HCT116 (cell line): ENCODE measurements at regions of chr11 and their contacts with region 1.

Region 1: GRCh38 chr11:14249121-14249963 is 109.6 kb downstream of the RRAS2 start:
- DNase-seq: peak; percentile 27
- ATAC-seq: peak; percentile 80
- H3K4me3 ChIP-seq: no peak overlapping the region
- H3K27ac ChIP-seq: no peak overlapping the region
- H3K4me1 ChIP-seq: no peaks in the 10 kb centered on the region
- H3K27me3 ChIP-seq: peaks cover 27% of the 10 kb centered on the region; the same call in 1 of the 2 replicates
- CTCF ChIP-seq: peak; percentile 76 to 98 (median 91)
- POLR2A ChIP-seq: no peak
- RAD21 ChIP-seq: peak; percentile 99

Region 2: DNA sequence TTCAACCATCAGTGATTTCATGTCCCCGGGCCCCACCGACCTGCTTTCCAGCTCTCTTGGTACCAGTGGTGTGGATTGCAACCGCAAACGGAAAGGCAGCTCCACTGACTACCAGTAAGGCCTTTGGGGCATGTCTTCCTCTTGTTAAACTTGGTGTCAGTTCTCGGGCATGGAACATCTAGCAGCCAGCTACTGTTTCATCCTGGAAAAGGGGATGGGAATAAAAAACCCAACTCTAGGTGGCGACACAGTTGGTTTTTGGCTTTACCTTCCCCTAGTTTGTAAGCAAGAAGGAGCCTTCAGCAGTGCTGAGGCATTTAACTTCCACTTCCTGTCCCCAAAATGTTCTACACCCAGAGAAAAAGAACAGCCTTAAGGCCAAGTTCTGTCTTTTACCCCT is 895.0 kb before region 1 on chr11:
- CTCF ChIA-PET with region 1: no interaction called
- POLR2A ChIA-PET with region 1: no interaction called
- RAD21 ChIA-PET with region 1: no interaction called
- intact Hi-C with region 1: loop called (anchors 10 kb)
- DNase-seq: no peak
- ATAC-seq: peak; percentile 87
- H3K4me3 ChIP-seq: no peak overlapping the region
- H3K27ac ChIP-seq: no peak overlapping the region
- H3K4me1 ChIP-seq: peaks cover 0 to 7% of the 10 kb centered on the region in 2 experiments; a peak in 1 of 4 replicates
- H3K27me3 ChIP-seq: no peaks in the 10 kb centered on the region
- CTCF ChIP-seq: peak; percentile 33 to 58 (median 57); a peak in 5 of 6 replicates
- POLR2A ChIP-seq: no peak
- RAD21 ChIP-seq: peak; percentile 59

Region 3: DNA sequence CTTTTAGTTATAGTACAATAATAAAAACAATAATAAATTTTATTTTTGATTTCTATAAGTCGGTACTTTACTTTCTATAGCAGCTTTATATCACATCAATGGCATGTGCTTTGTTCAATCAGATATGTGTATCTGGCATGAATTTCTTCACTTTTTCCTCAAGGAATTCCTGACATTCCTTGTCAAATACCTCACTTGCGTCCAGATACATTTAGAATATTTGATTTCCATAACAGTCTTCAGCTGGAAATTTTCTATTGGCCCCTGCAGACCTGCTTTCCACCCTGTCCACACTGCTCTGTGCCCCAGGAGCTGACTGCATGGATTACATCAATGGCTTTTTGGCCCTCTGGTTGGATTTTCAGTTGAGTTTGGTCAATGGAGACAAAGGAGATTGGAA is 487.6 kb before region 1 on chr11:
- CTCF ChIA-PET with region 1: no interaction called
- POLR2A ChIA-PET with region 1: no interaction called
- RAD21 ChIA-PET with region 1: no interaction called
- intact Hi-C with region 1: no loop called
- DNase-seq: no peak
- ATAC-seq: no peak
- H3K4me3 ChIP-seq: no peak overlapping the region
- H3K27ac ChIP-seq: no peak overlapping the region
- H3K4me1 ChIP-seq: peaks cover 0 to 11% of the 10 kb centered on the region in 2 experiments; a peak in 2 of 4 replicates
- H3K27me3 ChIP-seq: no peaks in the 10 kb centered on the region
- CTCF ChIP-seq: no peak
- POLR2A ChIP-seq: no peak
- RAD21 ChIP-seq: no peak

Region 4: DNA sequence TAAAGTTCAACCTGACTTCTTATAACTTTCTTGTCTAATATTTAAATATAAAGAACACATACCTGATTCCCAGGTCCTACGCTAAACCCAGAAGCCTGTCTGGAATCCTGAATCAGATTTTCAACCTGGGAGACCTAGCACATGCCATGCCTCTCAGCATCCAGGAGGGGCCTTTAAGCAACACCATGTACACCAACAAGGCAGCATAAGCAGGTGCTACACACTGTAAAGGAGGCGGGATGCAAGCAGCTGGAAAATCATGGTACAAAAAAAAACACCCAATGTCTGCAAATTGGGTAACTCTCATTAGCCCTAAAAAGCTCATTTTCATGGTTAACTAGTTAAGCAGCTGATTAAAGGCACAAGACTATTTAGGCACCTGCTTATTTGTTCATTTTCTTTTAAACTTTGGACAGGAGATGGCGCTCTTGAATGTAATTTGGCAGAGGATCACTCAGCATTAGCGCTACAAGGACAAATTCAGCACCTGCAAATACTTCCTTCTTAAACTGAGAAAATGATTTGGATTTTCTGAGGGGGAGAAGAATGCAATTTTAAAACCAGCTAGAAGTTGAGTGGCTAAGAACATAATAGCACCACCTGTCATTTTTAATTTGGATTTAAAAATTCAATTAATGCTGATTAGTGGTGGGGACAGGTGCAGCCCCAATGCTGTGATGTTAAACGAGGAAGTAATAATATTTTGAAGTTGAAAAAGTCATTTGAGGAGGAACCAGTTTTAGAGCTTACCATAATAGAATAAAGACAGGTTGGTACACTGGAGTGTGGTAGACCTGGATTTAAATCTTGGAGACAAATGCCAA is 476.9 kb before region 1 on chr11:
- CTCF ChIA-PET with region 1: interaction called, 10 read pairs
- POLR2A ChIA-PET with region 1: no interaction called
- RAD21 ChIA-PET with region 1: no interaction called
- intact Hi-C with region 1: loop called (anchors 1 kb)
- DNase-seq: peak; percentile 67
- ATAC-seq: peak; percentile 86
- H3K4me3 ChIP-seq: no peak overlapping the region
- H3K27ac ChIP-seq: no peak overlapping the region
- H3K4me1 ChIP-seq: no peaks in the 10 kb centered on the region
- H3K27me3 ChIP-seq: no peaks in the 10 kb centered on the region
- CTCF ChIP-seq: peak; percentile 27 to 85 (median 75); a peak in 5 of 6 replicates
- POLR2A ChIP-seq: no peak
- RAD21 ChIP-seq: peak; percentile 94

Region 5: GRCh38 chr11:13955971-13956421 is 293.3 kb before region 1 on chr11:
- CTCF ChIA-PET with region 1: interaction called, 5 read pairs
- POLR2A ChIA-PET with region 1: no interaction called
- RAD21 ChIA-PET with region 1: interaction called in 1 of 2 experiments, 3 read pairs
- intact Hi-C with region 1: loop called (anchors 1 kb)
- DNase-seq: peak; percentile 54
- ATAC-seq: peak; percentile 84
- H3K4me3 ChIP-seq: no peak overlapping the region
- H3K27ac ChIP-seq: no peak overlapping the region
- H3K4me1 ChIP-seq: peaks cover 0 to 5% of the 10 kb centered on the region in 2 experiments; a peak in 1 of 4 replicates
- H3K27me3 ChIP-seq: peaks cover 25% of the 10 kb centered on the region; the same call in 1 of the 2 replicates
- CTCF ChIP-seq: peak; percentile 74 to 90 (median 86)
- POLR2A ChIP-seq: no peak
- RAD21 ChIP-seq: peak; percentile 92

Region 6: DNA sequence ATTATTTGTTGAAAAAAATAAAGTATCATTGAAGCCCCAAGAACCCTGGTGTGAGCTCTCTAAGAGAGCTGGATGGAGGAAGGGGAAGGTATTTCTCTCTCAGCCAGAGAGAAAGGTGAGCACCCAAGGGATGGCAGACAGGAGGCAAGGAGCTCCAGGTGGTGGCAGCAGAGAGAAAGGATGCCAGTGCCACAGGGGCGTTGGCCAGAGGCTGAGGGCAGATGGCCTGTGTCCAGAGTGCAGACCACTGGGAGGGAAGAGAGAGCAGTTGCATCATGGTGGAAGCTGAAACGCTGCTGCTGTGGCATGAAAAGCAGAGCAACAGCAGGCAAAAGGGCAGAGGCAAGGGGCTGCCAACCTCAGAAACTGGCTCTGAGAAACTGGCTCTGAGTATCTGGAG is 278.4 kb before region 1 on chr11:
- CTCF ChIA-PET with region 1: interaction called, 3 read pairs
- POLR2A ChIA-PET with region 1: no interaction called
- RAD21 ChIA-PET with region 1: no interaction called
- intact Hi-C with region 1: loop called (anchors 5 kb)
- DNase-seq: peak; percentile 24
- ATAC-seq: peak; percentile 99
- H3K4me3 ChIP-seq: no peak overlapping the region
- H3K27ac ChIP-seq: no peak overlapping the region
- H3K4me1 ChIP-seq: no peaks in the 10 kb centered on the region
- H3K27me3 ChIP-seq: peaks cover 9% of the 10 kb centered on the region; the same call in 1 of the 2 replicates
- CTCF ChIP-seq: peak; percentile 69 to 76 (median 76)
- POLR2A ChIP-seq: no peak
- RAD21 ChIP-seq: peak; percentile 86

Region 7: DNA sequence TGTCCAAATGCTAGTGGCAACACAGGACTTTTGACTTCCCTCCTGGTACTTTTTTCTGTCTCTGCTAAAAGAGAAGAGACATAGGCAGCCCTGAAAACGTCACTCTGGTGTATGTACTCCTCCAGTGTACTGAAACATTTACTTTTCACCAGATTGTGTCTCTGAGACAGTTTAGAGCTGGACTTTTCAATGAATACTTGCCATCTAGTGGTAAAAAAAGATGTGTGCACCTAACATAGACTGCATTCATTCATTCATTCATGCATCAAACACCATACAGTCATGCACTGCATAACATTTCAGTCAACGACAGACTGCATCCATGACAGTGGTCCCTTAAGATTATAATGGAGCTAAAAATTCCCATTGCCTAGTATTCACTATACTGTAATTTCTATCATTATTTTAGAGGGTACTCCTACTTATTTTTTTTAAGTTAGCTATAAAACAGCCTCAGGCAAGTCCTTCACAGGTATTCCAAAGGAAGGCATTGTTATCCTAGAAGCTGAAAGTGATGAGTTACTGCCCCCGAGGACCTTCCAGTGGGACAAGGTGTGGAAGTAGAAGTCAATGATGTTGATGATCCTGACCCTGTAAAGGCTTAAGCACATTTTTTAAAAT is 100.6 kb before region 1 on chr11:
- CTCF ChIA-PET with region 1: interaction called, 6 read pairs
- POLR2A ChIA-PET with region 1: no interaction called
- RAD21 ChIA-PET with region 1: no interaction called
- intact Hi-C with region 1: loop called (anchors 1 kb)
- DNase-seq: peak; percentile 29
- ATAC-seq: peak; percentile 98
- H3K4me3 ChIP-seq: no peak overlapping the region
- H3K27ac ChIP-seq: no peak overlapping the region
- H3K4me1 ChIP-seq: no peaks in the 10 kb centered on the region
- H3K27me3 ChIP-seq: 0 out of 2 replicates have a peak, but pooled peaks cover 7% of the 10 kb centered on the region
- CTCF ChIP-seq: peak; percentile 56 to 73 (median 70)
- POLR2A ChIP-seq: no peak
- RAD21 ChIP-seq: peak; percentile 79

Region 8: DNA sequence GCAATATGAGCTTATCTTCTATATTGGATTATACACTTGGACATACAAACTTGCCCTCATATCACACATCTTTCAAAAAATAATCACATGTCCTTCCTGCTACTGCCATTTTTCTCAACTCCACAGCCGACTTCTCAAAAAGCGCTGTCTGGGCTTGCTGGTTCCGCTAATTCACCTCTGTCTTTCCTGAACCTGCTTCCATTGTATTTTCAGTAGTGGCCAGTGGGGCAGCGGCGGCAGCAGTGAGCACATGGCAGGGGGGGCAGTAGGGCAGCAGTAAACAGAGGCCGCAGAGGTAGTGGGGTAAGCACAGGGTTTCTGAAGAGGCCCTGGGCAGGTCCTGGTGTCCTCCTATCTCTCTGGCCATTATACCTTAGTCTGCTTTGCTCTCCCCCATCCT is 16.7 kb before region 1 on chr11:
- CTCF ChIA-PET with region 1: no interaction called
- POLR2A ChIA-PET with region 1: no interaction called
- RAD21 ChIA-PET with region 1: no interaction called
- intact Hi-C with region 1: no loop called
- DNase-seq: no peak
- ATAC-seq: peak; percentile 94
- H3K4me3 ChIP-seq: no peak overlapping the region
- H3K27ac ChIP-seq: no peak overlapping the region
- H3K4me1 ChIP-seq: no peaks in the 10 kb centered on the region
- H3K27me3 ChIP-seq: peaks cover 39% of the 10 kb centered on the region
- CTCF ChIP-seq: peak; percentile 17 to 79 (median 75); a peak in 5 of 6 replicates
- POLR2A ChIP-seq: no peak
- RAD21 ChIP-seq: peak; percentile 20; the same call in 1 of the 2 replicates